WTC11 (cell line): ENCODE measurements at regions of chr6 and their contacts with region 1.

Region 1: DNA sequence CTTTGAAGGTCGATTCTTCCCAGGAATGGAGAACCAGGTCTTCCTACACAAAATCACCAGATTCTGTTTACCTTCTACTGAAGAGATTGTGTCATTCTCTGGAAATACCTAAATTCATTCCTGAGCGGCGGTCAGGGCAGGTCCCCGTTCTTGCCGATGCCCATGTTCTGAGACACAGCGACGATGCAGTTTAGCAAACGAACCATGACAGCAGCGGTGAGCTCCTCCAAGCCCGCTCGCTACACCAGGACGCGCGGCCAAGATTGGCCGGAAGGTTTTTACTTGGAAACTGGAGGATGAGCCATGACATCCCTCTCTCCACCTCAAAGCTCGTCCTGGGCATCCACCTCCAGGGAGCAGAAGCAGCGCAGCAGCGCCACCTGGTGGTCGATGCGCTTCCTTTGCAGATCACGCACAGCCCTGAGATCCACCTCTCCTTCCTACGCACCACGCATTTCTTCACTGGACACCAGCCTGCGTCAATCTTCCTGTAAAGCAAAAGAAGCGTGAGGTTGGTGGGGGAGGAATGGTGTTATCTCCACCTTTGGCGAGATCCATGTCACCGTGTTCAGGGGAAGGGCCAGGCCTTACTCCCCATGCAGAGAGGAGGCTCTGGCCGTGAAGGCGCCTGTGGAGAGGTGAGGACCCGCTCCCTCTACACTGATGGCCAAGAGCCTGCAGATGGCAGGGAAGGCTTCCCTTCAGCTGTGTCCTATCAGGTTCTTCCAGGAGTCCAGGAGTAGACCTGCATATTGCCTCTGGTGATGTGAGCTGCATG is 9.9 kb upstream of the HLA-B start:
- DNase-seq: peak; percentile 91
- ATAC-seq: peak; percentile 96
- H3K4me3 Mint-ChIP-seq: peak overlapping the region; percentile 63
- H3K27ac Mint-ChIP-seq: no peak overlapping the region
- H3K4me1 Mint-ChIP-seq: peaks cover 4% of the 10 kb centered on the region; the same call in 1 of the 2 replicates
- H3K27me3 Mint-ChIP-seq: peaks cover 72% of the 10 kb centered on the region
- CTCF ChIP-seq: peak; percentile 88

Region 2: DNA sequence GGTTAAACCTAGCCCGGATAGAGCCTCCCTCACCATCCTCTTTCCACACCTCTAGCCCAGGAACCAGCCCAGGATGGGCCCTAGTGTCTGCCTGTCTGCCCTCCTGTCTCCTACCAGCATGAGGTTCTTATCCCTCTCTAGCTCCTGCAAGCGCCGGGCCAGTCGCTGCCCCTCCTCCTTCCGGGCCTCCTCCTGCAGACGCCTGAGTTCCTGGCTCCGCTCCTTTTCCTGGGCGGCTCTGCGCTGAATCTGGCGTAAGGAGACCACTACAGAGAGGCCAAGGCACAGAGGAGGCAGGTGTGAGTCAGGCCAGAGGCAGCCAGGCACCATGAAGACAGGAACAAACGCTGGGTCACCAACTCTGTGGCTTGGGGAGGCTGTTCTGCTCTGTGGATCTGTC is 223.7 kb before region 1 on chr6:
- CTCF ChIA-PET with region 1: interaction called, 16 read pairs
- POLR2A ChIA-PET with region 1: no interaction called
- DNase-seq: no peak
- ATAC-seq: peak; percentile 53
- H3K4me3 Mint-ChIP-seq: no peak overlapping the region
- H3K27ac Mint-ChIP-seq: peak overlapping the region; percentile 76; the same call in 1 of the 2 replicates
- H3K4me1 Mint-ChIP-seq: peaks cover 38% of the 10 kb centered on the region
- H3K27me3 Mint-ChIP-seq: peaks cover 4% of the 10 kb centered on the region
- CTCF ChIP-seq: no peak

Region 3: GRCh38 chr6:31203345-31203979 is 163.4 kb before region 1 on chr6:
- CTCF ChIA-PET with region 1: interaction called, 60 read pairs
- POLR2A ChIA-PET with region 1: no interaction called
- DNase-seq: no peak
- ATAC-seq: no peak
- H3K4me3 Mint-ChIP-seq: no peak overlapping the region; the same call in 1 of the 2 replicates
- H3K27ac Mint-ChIP-seq: peak overlapping the region; percentile 55
- H3K4me1 Mint-ChIP-seq: peaks cover 18% of the 10 kb centered on the region
- H3K27me3 Mint-ChIP-seq: no peaks in the 10 kb centered on the region; the same call in 1 of the 2 replicates
- CTCF ChIP-seq: no peak

Region 4: GRCh38 chr6:31246050-31246521 is 120.8 kb before region 1 on chr6:
- CTCF ChIA-PET with region 1: interaction called, 11 read pairs
- POLR2A ChIA-PET with region 1: no interaction called
- DNase-seq: no peak
- ATAC-seq: peak; percentile 44; the same call in 1 of the 2 replicates
- H3K4me3 Mint-ChIP-seq: no peak overlapping the region
- H3K27ac Mint-ChIP-seq: no peak overlapping the region
- H3K4me1 Mint-ChIP-seq: peaks cover 11% of the 10 kb centered on the region
- H3K27me3 Mint-ChIP-seq: peaks cover 27% of the 10 kb centered on the region
- CTCF ChIP-seq: no peak

Region 5: GRCh38 chr6:31308050-31308844 is 58.6 kb before region 1 on chr6:
- CTCF ChIA-PET with region 1: interaction called, 11 read pairs
- POLR2A ChIA-PET with region 1: interaction called, 6 read pairs
- DNase-seq: peak; percentile 88
- ATAC-seq: peak; percentile 97
- H3K4me3 Mint-ChIP-seq: peak overlapping the region; percentile 72
- H3K27ac Mint-ChIP-seq: no peak overlapping the region
- H3K4me1 Mint-ChIP-seq: no peaks in the 10 kb centered on the region
- H3K27me3 Mint-ChIP-seq: peaks cover 50% of the 10 kb centered on the region
- CTCF ChIP-seq: no peak

Region 6: GRCh38 chr6:31383149-31383548 is 16.3 kb after region 1 on chr6:
- CTCF ChIA-PET with region 1: interaction called, 19 read pairs
- POLR2A ChIA-PET with region 1: no interaction called
- DNase-seq: no peak
- ATAC-seq: no peak
- H3K4me3 Mint-ChIP-seq: no peak overlapping the region
- H3K27ac Mint-ChIP-seq: no peak overlapping the region
- H3K4me1 Mint-ChIP-seq: peaks cover 10% of the 10 kb centered on the region
- H3K27me3 Mint-ChIP-seq: no peaks in the 10 kb centered on the region; the same call in 1 of the 2 replicates
- CTCF ChIP-seq: no peak